Activated CD4-positive, alpha-beta T cell treated with anti-CD3 and anti-CD28 coated beads, Interleukin-2, amount 10 ng/mL, durations not matched to agents 24 days and 14 days (primary cell): ENCODE measurements at regions of chr5 and their contacts with region 1.

Region 1: GRCh38 chr5:35838370-35839042 is 18.2 kb upstream of the IL7R start:
- DNase-seq: peak; percentile 58
- H3K4me3 Mint-ChIP-seq: peak overlapping the region; percentile 39
- H3K27ac Mint-ChIP-seq: peak overlapping the region; percentile 88
- H3K4me1 Mint-ChIP-seq: peaks cover 53% of the 10 kb centered on the region
- H3K27me3 Mint-ChIP-seq: no peaks in the 10 kb centered on the region

Region 2: GRCh38 chr5:35736280-35736679 is 102.2 kb before region 1 on chr5:
- intact Hi-C with region 1: loop called (anchors 5 kb)
- DNase-seq: peak; percentile 54
- H3K4me3 Mint-ChIP-seq: no peak overlapping the region
- H3K27ac Mint-ChIP-seq: peak overlapping the region; percentile 41
- H3K4me1 Mint-ChIP-seq: peaks cover 20% of the 10 kb centered on the region
- H3K27me3 Mint-ChIP-seq: no peaks in the 10 kb centered on the region

Region 3: GRCh38 chr5:35828082-35828598 is 10.4 kb before region 1 on chr5:
- intact Hi-C with region 1: loop called (anchors 1 kb)
- DNase-seq: peak; percentile 61
- H3K4me3 Mint-ChIP-seq: peak overlapping the region; percentile 34
- H3K27ac Mint-ChIP-seq: peak overlapping the region; percentile 98
- H3K4me1 Mint-ChIP-seq: peaks cover 80% of the 10 kb centered on the region
- H3K27me3 Mint-ChIP-seq: no peaks in the 10 kb centered on the region